Activated T-helper 1 cell treated with anti-CD3 and anti-CD28 coated beads, Interleukin-12 subunit alpha, Interleukin-12 subunit beta, Interleukin-2, Interleukin-4 antibody, amounts not matched to agents 30 ng/mL and 10 ng/mL and 1 ng/mL, durations not matched to agents 14 hours and 24 hours and 36 hours (primary cell): ENCODE measurements at regions of chr4 and their contacts with region 1.

Region 1: GRCh38 chr4:123671633-123672404 is 275.2 kb downstream of the SPRY1 start:
- DNase-seq: peak; percentile 14
- H3K4me3 Mint-ChIP-seq: no peak overlapping the region
- H3K27ac Mint-ChIP-seq: peak overlapping the region; percentile 7
- H3K4me1 Mint-ChIP-seq: peaks cover 43% of the 10 kb centered on the region
- H3K27me3 Mint-ChIP-seq: peaks cover 46% of the 10 kb centered on the region

Region 2: DNA sequence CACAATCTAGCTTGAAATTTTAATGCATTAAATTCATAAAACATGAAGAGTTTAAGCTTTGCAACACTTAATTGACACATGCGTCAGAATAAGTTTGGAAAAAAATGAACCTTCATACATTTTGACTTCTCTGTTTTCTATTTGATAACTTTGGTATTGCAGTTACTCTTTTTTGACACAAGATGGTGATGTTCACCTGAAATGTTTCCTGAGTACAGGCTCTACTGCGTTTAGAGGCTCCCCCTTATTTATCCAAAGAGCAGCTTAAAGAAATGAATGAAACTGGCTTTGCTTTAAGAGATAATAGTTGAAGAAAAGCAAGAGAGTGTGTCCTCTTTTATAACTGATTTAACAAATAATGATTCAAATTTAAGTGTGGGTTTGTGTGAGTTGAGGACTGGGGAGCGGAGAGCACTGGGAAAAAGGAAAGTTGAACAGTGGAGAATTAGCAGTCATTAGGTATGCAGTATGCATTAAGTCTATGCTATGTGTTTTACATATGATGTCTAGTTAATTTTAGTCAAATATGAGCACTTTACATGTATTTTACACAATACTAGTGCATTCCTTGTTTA is 568.8 kb before region 1 on chr4:
- intact Hi-C with region 1: loop called (anchors 5 kb)
- DNase-seq: no peak
- H3K4me3 Mint-ChIP-seq: no peak overlapping the region
- H3K27ac Mint-ChIP-seq: no peak overlapping the region
- H3K4me1 Mint-ChIP-seq: peaks cover 7% of the 10 kb centered on the region
- H3K27me3 Mint-ChIP-seq: no peaks in the 10 kb centered on the region

Region 3: DNA sequence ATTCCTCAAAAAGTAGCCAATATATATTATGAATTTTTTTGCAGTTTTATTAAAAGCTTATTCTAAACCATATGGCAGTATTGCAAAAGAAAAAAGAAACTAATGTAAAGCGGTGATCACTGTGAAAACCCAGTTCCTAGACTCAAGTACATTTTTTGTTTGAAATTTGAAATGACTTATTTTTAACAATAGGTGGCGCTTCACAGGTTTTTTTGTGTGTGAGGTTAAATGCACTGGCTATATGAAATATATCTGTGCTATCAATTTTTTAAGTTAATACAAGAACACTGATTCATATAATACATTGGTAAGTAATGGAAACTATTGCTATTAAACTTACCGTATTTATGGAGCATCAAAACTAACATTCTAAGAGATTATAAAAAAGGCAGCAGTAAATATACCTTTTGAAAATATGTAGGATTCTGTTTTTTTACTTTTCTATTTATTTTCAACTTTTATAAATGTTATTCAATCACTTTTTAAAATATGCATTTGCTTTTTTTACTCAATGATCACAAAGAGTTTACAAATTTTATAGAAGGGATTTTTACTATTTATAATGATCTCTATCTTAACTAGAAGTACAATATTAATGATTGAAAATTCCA is 280.9 kb before region 1 on chr4:
- intact Hi-C with region 1: loop called (anchors 2 kb)
- DNase-seq: no peak
- H3K4me3 Mint-ChIP-seq: no peak overlapping the region
- H3K27ac Mint-ChIP-seq: no peak overlapping the region
- H3K4me1 Mint-ChIP-seq: peaks cover 10% of the 10 kb centered on the region
- H3K27me3 Mint-ChIP-seq: peaks cover 23% of the 10 kb centered on the region

Region 4: DNA sequence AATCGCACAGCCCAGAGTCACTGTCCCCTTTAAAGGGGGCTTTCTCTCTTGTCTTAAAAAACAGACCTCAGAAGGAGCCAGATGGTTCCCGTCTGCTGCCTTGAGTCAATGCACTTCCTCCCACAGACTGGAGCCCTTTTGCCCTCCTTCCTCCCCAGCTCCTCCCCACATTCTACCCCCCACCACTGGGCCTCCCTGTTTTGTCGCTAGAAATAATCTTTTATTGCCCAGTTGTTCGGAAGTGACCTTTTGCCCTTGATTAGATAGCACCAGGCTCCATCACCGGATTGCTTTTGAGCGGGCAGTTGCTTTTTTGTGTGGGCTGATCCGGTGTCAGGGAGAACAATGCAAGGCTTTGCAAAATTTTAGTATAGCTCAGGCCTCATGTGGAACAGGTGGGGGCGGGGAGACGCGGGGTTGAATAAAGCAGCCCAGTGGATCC is 227.5 kb before region 1 on chr4:
- intact Hi-C with region 1: loop called (anchors 1 kb)
- DNase-seq: peak; percentile 20
- H3K4me3 Mint-ChIP-seq: peak overlapping the region; percentile 48
- H3K27ac Mint-ChIP-seq: peak overlapping the region; percentile 94
- H3K4me1 Mint-ChIP-seq: peaks cover 35% of the 10 kb centered on the region
- H3K27me3 Mint-ChIP-seq: no peaks in the 10 kb centered on the region

Region 5: DNA sequence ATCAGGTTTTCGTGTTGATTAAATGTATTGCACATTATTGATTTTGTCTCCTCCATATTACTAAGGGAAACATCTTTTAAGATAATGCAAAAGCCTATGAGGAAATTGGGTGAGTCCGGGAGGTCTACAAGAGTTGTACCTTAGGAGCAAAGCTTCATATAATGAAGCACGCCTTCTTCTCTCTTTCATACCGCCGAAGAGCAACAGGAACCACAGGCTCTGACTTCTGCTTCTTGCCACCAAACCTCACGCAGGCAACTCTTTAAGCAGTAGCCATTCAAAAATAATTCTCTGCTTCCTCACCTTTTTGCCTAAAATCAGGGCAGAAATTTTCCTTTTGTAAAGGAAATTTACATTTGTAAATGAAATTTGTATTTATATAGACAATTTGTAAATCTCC is 135.6 kb before region 1 on chr4:
- intact Hi-C with region 1: no loop called
- DNase-seq: no peak
- H3K4me3 Mint-ChIP-seq: no peak overlapping the region
- H3K27ac Mint-ChIP-seq: no peak overlapping the region
- H3K4me1 Mint-ChIP-seq: peaks cover 8% of the 10 kb centered on the region
- H3K27me3 Mint-ChIP-seq: peaks cover 14% of the 10 kb centered on the region

Region 6: DNA sequence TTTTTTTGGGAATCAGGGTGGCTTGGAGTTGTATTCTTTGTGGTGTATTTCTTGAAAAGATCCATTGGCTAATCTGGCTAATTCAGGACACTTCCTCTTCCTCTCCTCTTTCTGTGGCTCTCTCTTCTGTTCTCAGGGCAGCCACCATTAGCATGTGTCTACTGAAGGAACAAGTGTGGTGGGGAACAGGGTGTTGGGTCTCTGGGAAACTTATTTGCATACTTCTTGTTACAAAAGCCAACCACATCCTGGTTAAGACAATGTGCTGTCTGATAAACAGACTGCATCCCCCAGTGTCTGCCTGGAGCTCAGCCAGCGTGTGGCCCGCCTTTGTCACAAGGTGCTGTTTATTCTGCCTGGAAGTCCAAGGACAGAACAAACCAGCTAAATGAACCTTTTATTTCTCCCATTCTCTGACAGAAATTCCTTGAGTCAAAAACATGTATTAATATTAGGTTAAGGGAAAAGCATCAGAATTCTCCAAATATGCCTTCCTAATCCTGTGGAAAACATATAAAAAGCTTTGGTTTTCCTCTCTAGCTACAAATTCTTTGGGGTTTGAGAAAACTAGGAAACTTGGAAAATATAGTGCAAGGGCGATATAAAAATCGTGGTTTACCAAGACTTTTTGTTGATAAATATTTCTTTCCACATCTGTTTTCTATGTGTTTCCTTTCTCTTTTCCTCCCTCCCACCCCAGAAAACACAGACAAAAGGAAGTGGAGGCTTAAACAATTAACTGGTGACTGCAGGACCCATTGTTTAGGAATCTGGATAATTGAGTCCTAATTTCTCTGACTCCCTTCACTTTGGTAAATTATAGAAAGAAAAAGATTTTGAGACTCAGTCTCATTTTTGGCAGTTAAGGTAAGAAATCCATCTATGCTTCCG is 71.7 kb before region 1 on chr4:
- intact Hi-C with region 1: loop called (anchors 2 kb)
- DNase-seq: peak; percentile 41
- H3K4me3 Mint-ChIP-seq: peak overlapping the region; percentile 25
- H3K27ac Mint-ChIP-seq: peak overlapping the region; percentile 75
- H3K4me1 Mint-ChIP-seq: peaks cover 50% of the 10 kb centered on the region
- H3K27me3 Mint-ChIP-seq: no peaks in the 10 kb centered on the region